PC-9 (cell line): ENCODE measurements at regions of chr14 and their contacts with region 1.

Region 1: DNA sequence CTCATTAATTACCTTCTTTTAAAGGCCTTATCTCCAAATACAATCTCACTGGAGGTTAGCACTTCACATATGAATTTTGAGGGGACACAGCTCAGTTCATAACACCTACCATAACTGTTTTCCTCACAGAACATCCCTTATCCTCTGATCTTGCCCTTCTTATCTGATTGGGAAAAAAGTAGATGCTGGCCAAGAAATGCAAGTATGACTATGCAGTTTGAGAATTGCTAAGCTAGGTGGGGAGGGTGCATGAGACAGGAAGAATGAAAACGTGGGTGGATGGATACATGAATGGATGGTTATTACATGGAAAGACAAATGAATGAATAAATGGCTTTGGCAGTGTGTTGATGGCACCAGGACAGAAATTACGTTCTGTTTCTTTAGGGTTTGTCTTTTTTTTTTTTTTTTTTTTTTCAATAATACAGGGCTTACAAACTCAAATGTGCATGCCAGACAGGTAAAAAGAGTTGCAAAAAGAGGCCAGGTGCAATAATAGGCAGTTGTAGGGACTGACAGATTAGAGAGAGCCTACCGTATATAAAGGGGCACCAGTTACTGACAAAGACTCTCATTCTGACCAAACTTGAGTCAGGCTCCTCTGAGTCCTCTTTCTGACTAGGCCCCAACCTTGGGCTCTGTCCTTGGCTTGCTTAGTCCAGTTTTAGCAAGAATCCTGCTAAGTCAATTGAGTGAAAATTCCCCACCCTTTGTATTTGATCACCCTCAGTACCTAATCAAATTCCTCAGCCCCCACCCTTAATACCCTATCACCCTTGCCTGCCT is 304.9 kb downstream of the ZFP36L1 start:
- DNase-seq: peak; percentile 40 to 61
- H3K4me3 ChIP-seq: no peak overlapping the region
- H3K27ac ChIP-seq: peak overlapping the region; percentile 27; the same call in 1 of the 2 replicates
- H3K4me1 ChIP-seq: peaks cover 18% of the 10 kb centered on the region
- H3K27me3 ChIP-seq: no peaks in the 10 kb centered on the region
- CTCF ChIP-seq: no peak

Region 2: DNA sequence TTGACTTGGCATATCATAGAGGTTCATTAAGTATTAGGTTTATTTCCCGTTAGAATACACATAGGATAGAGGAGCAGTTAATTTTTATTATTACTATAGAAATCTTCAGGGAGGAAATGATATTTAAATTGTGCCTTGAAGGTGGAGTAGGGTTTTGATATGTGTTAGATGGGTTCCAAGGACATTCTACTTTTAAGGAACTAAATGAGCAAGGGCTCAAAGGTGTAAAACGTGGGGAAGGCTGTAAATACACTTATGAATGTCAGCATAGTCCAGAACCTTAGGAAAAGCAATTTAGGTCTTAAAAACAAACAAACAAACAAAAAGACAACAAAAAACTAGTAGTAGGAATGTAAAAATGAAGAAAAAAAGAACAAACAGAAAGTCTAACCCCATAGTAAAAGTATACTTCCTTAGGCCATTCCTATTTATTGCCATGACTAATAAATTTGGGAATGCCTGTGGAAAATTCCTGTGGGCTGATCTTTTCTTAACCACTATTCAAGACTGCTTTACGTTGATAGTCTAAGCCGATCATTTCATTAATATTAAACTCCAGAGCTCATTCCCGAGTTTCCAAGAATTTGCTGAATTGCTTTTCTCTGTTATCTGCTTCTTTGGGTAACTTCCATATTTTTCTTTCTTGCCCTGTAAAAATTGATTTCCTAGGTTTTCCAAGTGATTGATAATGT is 488.2 kb before region 1 on chr14:
- CTCF ChIA-PET with region 1: no interaction called
- POLR2A ChIA-PET with region 1: no interaction called
- intact Hi-C with region 1: no loop called
- DNase-seq: no peak
- H3K4me3 ChIP-seq: no peak overlapping the region
- H3K27ac ChIP-seq: no peak overlapping the region
- H3K4me1 ChIP-seq: peaks cover 7% of the 10 kb centered on the region; the same call in 1 of the 2 replicates
- H3K27me3 ChIP-seq: no peaks in the 10 kb centered on the region
- CTCF ChIP-seq: no peak

Region 3: DNA sequence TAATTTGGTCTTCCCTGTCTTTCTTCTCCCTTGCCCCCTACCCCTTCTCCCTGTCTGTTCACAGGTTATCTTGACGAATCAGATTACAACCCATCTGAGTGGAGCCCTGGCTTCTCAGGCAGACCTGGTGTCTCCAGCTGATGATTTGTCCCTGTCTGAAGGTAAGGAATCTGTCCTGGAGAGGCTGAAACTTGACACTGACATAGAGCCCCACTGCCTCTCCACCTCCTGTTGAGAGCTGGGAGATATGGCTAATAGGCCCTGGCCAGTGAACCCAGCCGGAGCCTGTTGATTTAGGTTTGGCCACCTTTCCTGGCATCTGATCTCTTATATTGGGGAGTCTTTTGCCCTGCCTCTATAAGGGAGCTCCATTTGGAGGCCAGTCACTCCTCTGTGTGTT is 196.2 kb before region 1 on chr14:
- CTCF ChIA-PET with region 1: interaction called, 13 read pairs
- POLR2A ChIA-PET with region 1: no interaction called
- intact Hi-C with region 1: no loop called
- DNase-seq: peak; percentile 21 to 37
- H3K4me3 ChIP-seq: no peak overlapping the region
- H3K27ac ChIP-seq: no peak overlapping the region; the same call in 1 of the 2 replicates
- H3K4me1 ChIP-seq: peaks cover 12% of the 10 kb centered on the region
- H3K27me3 ChIP-seq: no peaks in the 10 kb centered on the region
- CTCF ChIP-seq: no peak

Region 4: GRCh38 chr14:68939893-68940613 is 452.1 kb after region 1 on chr14:
- CTCF ChIA-PET with region 1: no interaction called
- POLR2A ChIA-PET with region 1: no interaction called
- intact Hi-C with region 1: no loop called
- DNase-seq: peak; percentile 76 to 80
- H3K4me3 ChIP-seq: no peak overlapping the region
- H3K27ac ChIP-seq: peak overlapping the region; percentile 40
- H3K4me1 ChIP-seq: peaks cover 78% of the 10 kb centered on the region
- H3K27me3 ChIP-seq: no peaks in the 10 kb centered on the region
- CTCF ChIP-seq: no peak